ENCODE measurements at regions of chr14 and their contacts with region 1.

Region 1: GRCh38 chr14:71555654-71556559 is 376.3 kb upstream of the RGS6 start:
- DNase-seq: peak; percentile 60
- H3K4me3 Mint-ChIP-seq: peak overlapping the region; percentile 55
- H3K27ac Mint-ChIP-seq: peak overlapping the region; percentile 96
- H3K4me1 Mint-ChIP-seq: peaks cover 77% of the 10 kb centered on the region
- H3K27me3 Mint-ChIP-seq: no peaks in the 10 kb centered on the region

Region 2: GRCh38 chr14:70907176-70907995 is 648.5 kb before region 1 on chr14 and contains the start of gene PCNX1:
- intact Hi-C with region 1: loop called (anchors 1 kb)
- DNase-seq: peak; percentile 84
- H3K4me3 Mint-ChIP-seq: peak within 1 kb of the TSS; percentile 86
- H3K27ac Mint-ChIP-seq: peak within 1 kb of the TSS; percentile 94
- H3K4me1 Mint-ChIP-seq: peaks cover 59% of the 10 kb centered on the region
- H3K27me3 Mint-ChIP-seq: peaks cover 2% of the 10 kb centered on the region
- total RNA-seq, gene PCNX1: 37.9 and 42.7 TPM in 2 replicates

Region 3: GRCh38 chr14:71221119-71221518 is 334.8 kb before region 1 on chr14:
- intact Hi-C with region 1: loop called (anchors 1 kb)
- DNase-seq: no peak
- H3K4me3 Mint-ChIP-seq: no peak overlapping the region
- H3K27ac Mint-ChIP-seq: no peak overlapping the region
- H3K4me1 Mint-ChIP-seq: peaks cover 34% of the 10 kb centered on the region
- H3K27me3 Mint-ChIP-seq: peaks cover 3% of the 10 kb centered on the region

Region 4: GRCh38 chr14:71320107-71320733 is 235.7 kb before region 1 on chr14:
- intact Hi-C with region 1: loop called (anchors 1 kb)
- DNase-seq: peak; percentile 98
- H3K4me3 Mint-ChIP-seq: peak within 1 kb of the TSS; percentile 94
- H3K27ac Mint-ChIP-seq: peak within 1 kb of the TSS; percentile 97
- H3K4me1 Mint-ChIP-seq: peaks cover 54% of the 10 kb centered on the region
- H3K27me3 Mint-ChIP-seq: peaks cover 2% of the 10 kb centered on the region

Region 5: GRCh38 chr14:71410578-71411284 is 145.2 kb before region 1 on chr14:
- intact Hi-C with region 1: loop called (anchors 1 kb)
- DNase-seq: no peak
- H3K4me3 Mint-ChIP-seq: no peak overlapping the region
- H3K27ac Mint-ChIP-seq: peak overlapping the region; percentile 84
- H3K4me1 Mint-ChIP-seq: peaks cover 62% of the 10 kb centered on the region
- H3K27me3 Mint-ChIP-seq: no peaks in the 10 kb centered on the region

Region 6: DNA sequence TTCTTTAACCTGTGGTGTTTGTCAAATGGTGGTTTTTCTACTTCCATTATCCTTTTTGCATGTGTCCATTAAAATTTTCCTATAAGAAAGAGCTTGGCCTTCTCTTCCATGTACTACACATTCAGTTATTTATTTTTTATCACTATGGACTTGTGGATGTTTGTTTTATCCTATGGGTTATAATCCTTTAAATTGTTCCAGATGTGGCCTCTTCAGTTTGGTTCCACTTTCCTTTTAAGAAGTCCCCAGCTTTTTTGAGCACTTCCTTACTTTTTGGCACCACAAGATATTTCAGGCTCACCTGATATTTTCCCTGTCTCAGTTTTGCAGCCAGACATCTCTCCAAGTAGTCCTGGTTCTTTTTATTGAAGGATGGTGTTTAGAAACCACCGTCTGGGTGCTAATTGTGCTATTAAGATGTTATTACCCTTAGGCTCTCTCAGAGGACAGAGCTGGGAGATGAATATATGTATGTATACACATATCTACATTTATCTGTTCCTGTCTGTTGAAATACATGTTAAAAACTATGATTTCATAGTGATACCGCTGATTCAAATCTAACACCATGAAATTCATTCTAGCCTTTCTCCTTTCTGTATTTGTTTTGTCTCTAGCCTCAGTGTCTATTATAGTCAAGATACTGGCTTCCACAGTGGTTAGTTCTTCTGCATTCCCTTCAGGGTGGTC is 32.1 kb before region 1 on chr14:
- intact Hi-C with region 1: loop called (anchors 1 kb)
- DNase-seq: no peak
- H3K4me3 Mint-ChIP-seq: no peak overlapping the region
- H3K27ac Mint-ChIP-seq: peak overlapping the region; percentile 32
- H3K4me1 Mint-ChIP-seq: peaks cover 21% of the 10 kb centered on the region
- H3K27me3 Mint-ChIP-seq: no peaks in the 10 kb centered on the region

Region 7: GRCh38 chr14:71539650-71540285 is 16.1 kb before region 1 on chr14:
- intact Hi-C with region 1: no loop called
- DNase-seq: no peak
- H3K4me3 Mint-ChIP-seq: no peak overlapping the region
- H3K27ac Mint-ChIP-seq: no peak overlapping the region
- H3K4me1 Mint-ChIP-seq: peaks cover 17% of the 10 kb centered on the region
- H3K27me3 Mint-ChIP-seq: no peaks in the 10 kb centered on the region

Region 8: GRCh38 chr14:71855399-71856036 is 299.6 kb after region 1 on chr14:
- intact Hi-C with region 1: loop called (anchors 10 kb)
- DNase-seq: peak; percentile 24
- H3K4me3 Mint-ChIP-seq: no peak overlapping the region
- H3K27ac Mint-ChIP-seq: no peak overlapping the region
- H3K4me1 Mint-ChIP-seq: peaks cover 14% of the 10 kb centered on the region
- H3K27me3 Mint-ChIP-seq: peaks cover 27% of the 10 kb centered on the region

Region 9: GRCh38 chr14:72094844-72095582 is 539.1 kb after region 1 on chr14:
- intact Hi-C with region 1: no loop called
- DNase-seq: no peak
- H3K4me3 Mint-ChIP-seq: no peak overlapping the region
- H3K27ac Mint-ChIP-seq: no peak overlapping the region
- H3K4me1 Mint-ChIP-seq: peaks cover 11% of the 10 kb centered on the region
- H3K27me3 Mint-ChIP-seq: peaks cover 5% of the 10 kb centered on the region

Measured in activated T-helper 1 cell treated with anti-CD3 and anti-CD28 coated beads, Interleukin-12 subunit alpha, Interleukin-12 subunit beta, Interleukin-2, Interleukin-4 antibody, amounts not matched to agents 30 ng/mL and 10 ng/mL and 1 ng/mL, durations not matched to agents 14 hours and 24 hours and 36 hours (primary cell).